SK-MEL-5 (cell line): ENCODE measurements at regions of chr17 and their contacts with region 1.

Region 1: DNA sequence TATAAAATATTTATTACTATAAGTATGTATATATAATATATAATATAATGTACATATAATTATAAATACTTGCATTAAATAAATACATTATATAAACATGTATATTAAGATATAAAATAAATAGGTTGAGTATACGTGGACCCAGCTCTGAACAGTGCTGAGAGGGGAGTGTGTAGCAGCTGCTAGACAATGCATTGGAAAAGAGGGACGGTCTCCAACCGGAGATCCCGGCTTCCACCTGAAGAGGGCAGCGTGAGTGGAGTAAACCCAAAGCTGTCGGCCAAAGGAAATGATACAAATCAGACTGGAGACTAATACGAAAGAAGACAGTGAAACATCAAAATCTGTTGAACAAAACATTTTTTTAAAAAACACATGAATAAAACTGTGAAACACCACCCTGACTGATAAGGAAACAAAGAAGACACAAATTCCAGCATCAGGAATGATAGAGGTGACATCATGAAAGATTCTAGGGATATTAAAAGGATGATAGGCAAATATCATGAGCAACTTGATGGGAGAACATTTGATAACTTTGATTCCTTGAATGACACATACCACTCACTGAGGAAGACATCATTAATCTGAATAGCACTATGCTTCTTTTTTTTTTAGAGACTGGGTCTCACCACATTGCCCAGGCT is 125.4 kb upstream of the CHMP6 start:
- DNase-seq: peak; percentile 90

Region 2: GRCh38 chr17:80619535-80620312 is 246.5 kb before region 1 on chr17:
- in situ Hi-C with region 1: loop called (anchors 10 kb)
- DNase-seq: no peak